Heart right ventricle (tissue), 16 donors: ENCODE measurements at regions of chr16 and their contacts with region 1.

Region 1: DNA sequence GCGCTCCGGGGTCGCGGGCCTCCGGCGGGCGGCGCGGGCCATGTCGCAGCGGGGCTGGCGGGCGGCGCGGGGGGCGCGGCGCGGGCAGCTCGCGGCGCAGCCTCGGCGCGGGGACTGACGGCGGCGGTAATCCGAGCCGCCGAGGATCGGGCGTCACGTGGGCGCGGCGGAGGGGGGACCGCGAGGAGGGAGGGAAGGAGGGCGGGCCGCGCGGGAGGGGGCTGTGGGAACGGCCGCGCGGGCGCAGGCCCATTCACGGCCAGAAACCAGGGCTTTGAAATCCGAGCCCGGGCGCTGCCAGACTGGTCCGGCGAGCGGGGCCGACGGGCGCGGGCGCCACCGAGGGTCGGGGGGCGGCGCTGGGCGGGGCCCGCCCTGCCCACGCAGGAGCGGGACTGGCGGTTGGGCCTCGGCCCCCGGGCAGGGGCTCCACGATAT is at the start of gene MTSS2:
- DNase-seq: peak; percentile 86 to 89
- ATAC-seq: peak; percentile 23 to 77 (median 70)
- H3K4me3 ChIP-seq: peak within 1 kb of the TSS; percentile 64 to 92 (median 76)
- H3K27ac ChIP-seq: peak within 1 kb of the TSS; percentile 58 to 94 (median 85)
- H3K4me1 ChIP-seq: peaks cover 61 to 91% (median 84%) of the 10 kb centered on the region in 9 donors
- H3K27me3 ChIP-seq: peaks cover 0 to 9% (median 0%) of the 10 kb centered on the region in 7 donors
- CTCF ChIP-seq: no peak
- total RNA-seq, gene MTSS2: 39.8 to 121 (median 62.1) TPM

Region 2: GRCh38 chr16:70630960-70631745 is 54.8 kb before region 1 on chr16:
- intact Hi-C with region 1: no loop called
- DNase-seq: no peak
- ATAC-seq: no peak
- H3K4me3 ChIP-seq: no peak overlapping the region
- H3K27ac ChIP-seq: peak overlapping the region in 3 of 10 donors; percentile 2 to 52 (median 4)
- H3K4me1 ChIP-seq: peaks cover 0 to 10% (median 0%) of the 10 kb centered on the region in 9 donors
- H3K27me3 ChIP-seq: no peaks in the 10 kb centered on the region
- CTCF ChIP-seq: no peak

Region 3: DNA sequence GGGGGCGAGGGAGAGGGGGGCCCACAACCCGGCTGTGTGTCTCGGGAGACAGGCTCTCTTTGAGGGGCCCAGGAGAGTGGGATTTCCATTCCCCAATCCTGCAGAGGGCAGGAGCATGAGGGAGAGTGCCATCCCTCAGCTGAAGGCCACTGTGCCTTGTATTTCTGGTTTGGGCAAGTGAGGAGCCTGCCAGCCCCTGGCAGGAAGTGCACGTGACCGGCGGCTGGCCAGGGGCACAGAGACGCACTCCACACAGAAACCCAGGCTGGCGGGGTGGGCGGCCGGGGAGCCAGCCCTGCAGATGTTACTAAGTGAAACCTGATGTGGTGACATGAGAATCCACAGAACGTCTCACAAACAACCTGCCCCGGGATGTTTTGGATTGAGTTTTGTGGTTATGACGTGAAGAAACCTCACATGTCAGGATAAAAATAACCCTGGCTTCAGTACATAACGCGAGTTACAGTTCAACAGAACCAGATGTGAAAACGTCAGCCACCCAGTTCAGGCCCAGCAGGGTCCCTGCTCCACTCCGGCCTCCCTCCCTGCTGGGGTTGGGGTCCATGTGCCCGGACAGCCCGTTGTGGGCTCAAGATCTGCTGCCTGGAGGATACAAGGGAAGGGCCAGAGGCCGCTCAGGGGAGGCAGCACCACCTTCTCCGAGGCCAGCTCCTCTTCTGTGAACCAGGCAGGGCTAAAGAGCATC is 51.6 kb after region 1 on chr16:
- intact Hi-C with region 1: loop called in 9 of 10 experiments (anchors 2 to 10 kb)
- DNase-seq: peak; percentile 74 to 76
- ATAC-seq: peak; percentile 60 to 85 (median 72)
- H3K4me3 ChIP-seq: peak overlapping the region in 1 of 10 donors; percentile 8
- H3K27ac ChIP-seq: peak overlapping the region; percentile 81 to 92 (median 86)
- H3K4me1 ChIP-seq: peaks cover 32 to 75% (median 45%) of the 10 kb centered on the region in 9 donors
- H3K27me3 ChIP-seq: no peaks in the 10 kb centered on the region
- CTCF ChIP-seq: peak in 1 of 9 donors; percentile 17

Region 4: GRCh38 chr16:70746708-70747424 is 60.9 kb after region 1 on chr16:
- intact Hi-C with region 1: loop called in 3 of 10 experiments (anchors 5 to 10 kb)
- DNase-seq: peak; percentile 43 to 79
- ATAC-seq: peak; percentile 40 to 77 (median 62)
- H3K4me3 ChIP-seq: no peak overlapping the region
- H3K27ac ChIP-seq: peak overlapping the region in 6 of 10 donors; percentile 7 to 75 (median 50)
- H3K4me1 ChIP-seq: peaks cover 29 to 70% (median 49%) of the 10 kb centered on the region in 9 donors
- H3K27me3 ChIP-seq: no peaks in the 10 kb centered on the region
- CTCF ChIP-seq: no peak

Region 5: GRCh38 chr16:70800781-70801530 is 115.0 kb after region 1 on chr16 and contains the start of gene VAC14:
- intact Hi-C with region 1: no loop called
- DNase-seq: peak; percentile 85 to 89
- ATAC-seq: peak; percentile 95 to 98 (median 96)
- H3K4me3 ChIP-seq: peak within 1 kb of the TSS; percentile 71 to 96 (median 82)
- H3K27ac ChIP-seq: peak within 1 kb of the TSS in 6 of 10 donors; percentile 6 to 82 (median 27)
- H3K4me1 ChIP-seq: peaks cover 5 to 26% (median 16%) of the 10 kb centered on the region in 9 donors
- H3K27me3 ChIP-seq: peaks cover 0 to 8% (median 0%) of the 10 kb centered on the region in 7 donors
- CTCF ChIP-seq: no peak
- total RNA-seq, gene VAC14: 19.2 to 27.9 (median 22.7) TPM